Activated CD8-positive, alpha-beta T cell treated with anti-CD3 and anti-CD28 coated beads, Interleukin-2, amount 10 ng/mL, durations not matched to agents 7 days and 5 days (primary cell): ENCODE measurements at regions of chr1 and their contacts with region 1.

Region 1: GRCh38 chr1:84442256-84442655 is 36.8 kb upstream of the RPF1 start:
- DNase-seq: peak; percentile 32
- ATAC-seq: peak; percentile 98
- H3K4me3 Mint-ChIP-seq: peak overlapping the region; percentile 37
- H3K27ac Mint-ChIP-seq: peak overlapping the region; percentile 59
- H3K4me1 Mint-ChIP-seq: peaks cover 21% of the 10 kb centered on the region
- H3K27me3 Mint-ChIP-seq: peaks cover 16% of the 10 kb centered on the region

Region 2: DNA sequence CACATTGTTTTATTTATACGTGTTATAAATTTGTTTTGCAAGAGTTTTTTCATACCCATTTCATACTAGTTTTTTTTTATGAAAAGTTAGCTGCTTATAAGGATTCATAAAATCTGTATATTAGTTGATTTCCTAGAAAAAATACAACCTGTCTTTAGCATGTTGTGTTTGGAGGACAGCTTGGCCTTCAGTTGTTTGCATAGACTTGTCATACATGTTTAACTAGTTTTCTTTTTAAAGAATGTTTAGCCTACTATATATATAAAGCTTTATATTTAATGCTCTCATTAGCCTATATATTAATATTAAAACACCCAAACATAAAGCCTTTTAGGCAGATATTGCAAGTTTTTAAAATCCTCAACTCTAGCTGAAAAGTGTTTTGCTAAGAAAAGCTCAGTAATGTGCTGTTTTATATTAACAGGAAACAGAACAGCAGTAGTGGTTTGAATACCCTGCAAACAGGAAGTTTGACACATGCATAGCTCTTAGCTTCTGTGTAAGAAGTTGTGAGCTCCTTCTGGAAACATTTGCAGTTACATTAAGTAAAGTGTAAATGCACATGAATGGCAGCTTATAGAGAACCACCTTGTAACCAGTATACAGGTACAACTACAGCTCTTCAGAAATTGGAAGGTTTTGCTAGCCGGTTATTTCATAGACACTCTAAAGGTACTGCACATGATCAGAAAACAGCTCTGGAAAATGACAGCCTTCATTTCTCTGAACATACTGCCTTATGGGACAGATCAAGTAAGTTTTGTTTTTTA is 298.3 kb before region 1 on chr1 and contains the start of gene PRKACB:
- CTCF ChIA-PET with region 1: interaction called, 177 read pairs
- POLR2A ChIA-PET with region 1: interaction called, 26 read pairs
- DNase-seq: peak; percentile 42
- ATAC-seq: peak; percentile 94
- H3K4me3 Mint-ChIP-seq: peak within 1 kb of the TSS; percentile 88
- H3K27ac Mint-ChIP-seq: peak within 1 kb of the TSS; percentile 95
- H3K4me1 Mint-ChIP-seq: peaks cover 27% of the 10 kb centered on the region
- H3K27me3 Mint-ChIP-seq: no peaks in the 10 kb centered on the region
- total RNA-seq, gene PRKACB: 85.2 to 96.3 TPM

Region 3: DNA sequence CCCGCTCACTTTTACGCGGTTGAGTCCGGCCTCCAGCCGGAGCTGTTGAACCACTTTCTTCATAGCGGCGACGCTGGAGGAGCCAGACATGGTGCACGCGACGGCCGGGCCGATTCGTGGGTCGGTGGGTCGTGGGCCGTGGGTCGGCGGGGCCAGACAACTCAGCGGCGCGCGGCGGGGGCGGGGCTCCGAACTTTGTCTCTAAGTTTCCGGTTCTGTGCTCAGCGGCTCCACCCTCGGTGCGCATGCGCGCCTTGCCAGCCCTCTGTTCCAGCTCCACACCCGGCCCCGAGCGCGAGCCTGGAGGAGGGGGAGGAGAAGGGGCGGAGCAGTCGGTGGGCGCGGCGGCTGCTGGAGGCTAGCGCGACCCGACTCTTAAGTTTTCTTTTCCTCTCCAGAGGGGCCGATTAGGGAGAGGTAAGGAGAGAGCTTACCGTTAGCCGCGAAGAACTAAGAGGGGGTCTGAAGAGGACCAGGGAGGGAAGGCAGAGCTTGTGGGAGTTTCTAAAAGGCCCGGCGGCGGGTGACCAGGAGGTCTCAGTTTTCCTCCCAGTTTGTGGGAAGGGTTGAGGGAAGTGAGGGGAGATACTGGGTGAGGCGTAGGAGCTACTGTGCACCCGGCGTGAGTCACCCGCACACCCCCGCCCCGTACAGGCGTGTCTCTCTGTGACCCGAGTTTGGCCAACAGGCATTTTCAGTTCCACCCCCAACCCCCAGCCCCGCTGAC is 63.9 kb after region 1 on chr1 and contains the starts of genes GNG5 and SPATA1:
- CTCF ChIA-PET with region 1: interaction called, 4 read pairs
- POLR2A ChIA-PET with region 1: interaction called, 18 read pairs
- DNase-seq: peak; percentile 99
- ATAC-seq: peak; percentile 94
- H3K4me3 Mint-ChIP-seq: peak within 1 kb of the TSS; percentile 100
- H3K27ac Mint-ChIP-seq: peak within 1 kb of the TSS; percentile 99
- H3K4me1 Mint-ChIP-seq: peaks cover 35% of the 10 kb centered on the region
- H3K27me3 Mint-ChIP-seq: no peaks in the 10 kb centered on the region
- total RNA-seq, gene GNG5: 99.0 to 106 TPM
- total RNA-seq, gene SPATA1: 3.3 to 3.4 TPM

Region 4: GRCh38 chr1:84620720-84621313 is 178.6 kb after region 1 on chr1:
- CTCF ChIA-PET with region 1: interaction called, 27 read pairs
- POLR2A ChIA-PET with region 1: no interaction called
- DNase-seq: peak; percentile 81
- ATAC-seq: peak; percentile 96
- H3K4me3 Mint-ChIP-seq: peak overlapping the region; percentile 84
- H3K27ac Mint-ChIP-seq: peak overlapping the region; percentile 83
- H3K4me1 Mint-ChIP-seq: peaks cover 13% of the 10 kb centered on the region
- H3K27me3 Mint-ChIP-seq: peaks cover 3% of the 10 kb centered on the region

Region 5: DNA sequence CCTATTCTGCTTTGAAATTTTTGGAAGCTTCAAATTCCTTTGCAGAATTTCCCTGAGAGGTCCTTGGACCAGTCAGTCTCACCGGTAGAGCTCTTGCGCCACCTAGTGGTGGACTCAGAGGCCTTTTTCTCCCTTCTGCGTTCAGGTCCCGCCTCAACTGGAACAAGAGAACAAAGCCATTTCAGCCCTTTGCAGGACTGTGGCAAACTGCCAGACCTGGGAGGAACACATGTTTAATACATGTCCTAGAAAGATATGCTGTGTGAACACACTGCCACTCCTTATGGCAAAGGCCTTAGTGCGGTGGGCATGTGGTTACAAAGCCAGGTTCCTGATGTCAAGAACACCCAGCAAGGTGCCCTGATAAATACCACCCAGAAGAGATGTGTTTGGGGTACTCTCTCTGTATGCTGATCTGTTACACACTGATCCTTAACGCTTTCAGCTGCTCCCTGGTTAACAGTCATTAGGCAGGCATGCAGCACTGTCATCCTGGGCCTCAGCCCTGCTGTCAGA is 330.2 kb after region 1 on chr1:
- CTCF ChIA-PET with region 1: interaction called, 20 read pairs
- POLR2A ChIA-PET with region 1: no interaction called
- DNase-seq: peak; percentile 80
- ATAC-seq: peak; percentile 76
- H3K4me3 Mint-ChIP-seq: no peak overlapping the region
- H3K27ac Mint-ChIP-seq: peak overlapping the region; percentile 23
- H3K4me1 Mint-ChIP-seq: no peaks in the 10 kb centered on the region
- H3K27me3 Mint-ChIP-seq: peaks cover 23% of the 10 kb centered on the region